ENCODE measurements at regions of chr6 and their contacts with region 1.

Region 1: DNA sequence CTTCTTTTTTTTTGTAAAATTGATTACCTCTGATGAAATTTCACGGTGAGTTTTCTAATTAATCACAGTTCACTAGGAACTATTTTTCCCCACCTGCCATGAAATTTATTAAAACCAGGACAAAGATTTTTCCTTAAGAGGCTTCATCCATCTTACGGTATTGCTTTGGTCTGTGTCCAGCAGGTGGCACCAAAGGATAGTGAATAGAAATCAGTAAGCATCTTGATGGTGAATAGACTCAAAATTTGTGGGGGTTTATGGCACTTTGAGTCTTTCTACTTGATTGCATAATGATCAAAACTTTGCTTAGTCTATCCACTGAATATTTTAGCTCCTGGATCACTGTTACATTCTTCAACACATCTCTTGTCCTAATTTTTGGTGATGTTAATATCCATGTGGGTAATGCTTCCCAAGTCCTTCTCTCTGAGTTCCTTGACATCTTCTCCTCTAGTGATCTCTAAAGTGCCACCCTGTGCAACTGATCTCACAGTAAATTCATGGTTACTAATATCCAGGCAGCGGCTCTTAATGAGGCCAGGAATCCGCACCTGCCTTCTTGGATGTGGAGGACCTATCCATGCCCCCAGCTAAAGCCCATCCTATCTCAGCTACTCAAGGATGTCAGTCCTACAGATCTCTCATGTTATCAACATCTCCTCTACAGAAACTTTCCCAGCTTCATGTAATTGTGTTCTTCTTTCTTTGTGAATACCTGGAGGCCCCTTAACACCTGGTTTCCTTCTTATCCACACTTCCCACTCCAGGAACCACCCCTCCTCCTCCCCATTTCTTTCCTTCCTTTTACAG is 54.5 kb downstream of the STMND1 start:
- DNase-seq: peak; percentile 88
- ATAC-seq: peak; percentile 76
- H3K4me3 ChIP-seq: no peak overlapping the region
- H3K27ac ChIP-seq: no peak overlapping the region
- H3K4me1 ChIP-seq: no peaks in the 10 kb centered on the region
- H3K27me3 ChIP-seq: no peaks in the 10 kb centered on the region
- CTCF ChIP-seq: peak; percentile 94

Region 2: DNA sequence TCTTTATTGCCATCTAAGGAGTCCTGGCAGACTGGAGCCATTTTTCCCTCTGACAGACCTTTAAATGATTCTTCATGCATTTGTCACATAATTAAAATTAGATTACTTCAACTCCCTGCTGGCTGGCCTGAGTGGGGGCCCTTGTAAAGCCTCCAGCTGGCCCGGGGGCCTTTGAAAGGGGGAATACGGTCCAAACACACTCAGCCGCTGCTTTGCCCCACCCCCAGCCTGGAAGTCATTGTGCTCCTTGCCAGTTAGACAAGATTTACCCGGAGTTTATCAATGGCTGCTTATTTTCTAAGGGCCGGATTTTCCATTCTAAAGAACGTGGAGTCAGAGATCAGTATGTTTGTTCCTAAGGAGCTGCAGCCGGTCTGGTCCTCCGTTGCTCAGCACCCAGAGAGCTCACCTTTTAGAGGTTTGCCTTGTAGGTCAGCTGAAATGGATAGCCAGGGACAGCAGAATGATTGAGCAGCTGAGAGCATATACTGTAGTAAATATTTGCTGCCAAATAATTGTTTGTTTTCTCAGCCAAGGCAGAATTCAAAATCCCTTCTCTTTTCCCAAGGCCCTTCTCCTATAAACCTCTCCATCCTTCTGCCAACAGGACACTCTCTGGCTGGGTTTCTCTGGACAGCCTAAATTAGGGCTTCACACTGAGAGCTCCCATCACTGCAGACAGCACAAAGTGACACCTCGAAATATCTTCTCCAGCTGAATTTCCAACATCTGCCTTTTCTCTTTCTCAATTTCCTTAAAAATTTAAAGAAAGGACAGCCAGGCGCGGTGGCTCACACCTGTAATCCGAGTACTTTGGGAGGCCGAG is 56.4 kb after region 1 on chr6:
- CTCF ChIA-PET with region 1: interaction called, 20 read pairs
- POLR2A ChIA-PET with region 1: no interaction called
- intact Hi-C with region 1: no loop called
- DNase-seq: no peak
- ATAC-seq: no peak
- H3K4me3 ChIP-seq: no peak overlapping the region
- H3K27ac ChIP-seq: no peak overlapping the region
- H3K4me1 ChIP-seq: no peaks in the 10 kb centered on the region
- H3K27me3 ChIP-seq: no peaks in the 10 kb centered on the region
- CTCF ChIP-seq: no peak

Region 3: GRCh38 chr6:17505062-17505476 is 348.8 kb after region 1 on chr6:
- CTCF ChIA-PET with region 1: no interaction called
- POLR2A ChIA-PET with region 1: no interaction called
- intact Hi-C with region 1: loop called (anchors 10 kb)
- DNase-seq: peak; percentile 39
- ATAC-seq: peak; percentile 70
- H3K4me3 ChIP-seq: no peak overlapping the region
- H3K27ac ChIP-seq: no peak overlapping the region
- H3K4me1 ChIP-seq: peaks cover 10% of the 10 kb centered on the region; the same call in 1 of the 2 replicates
- H3K27me3 ChIP-seq: no peaks in the 10 kb centered on the region
- CTCF ChIP-seq: peak; percentile 58

Region 4: DNA sequence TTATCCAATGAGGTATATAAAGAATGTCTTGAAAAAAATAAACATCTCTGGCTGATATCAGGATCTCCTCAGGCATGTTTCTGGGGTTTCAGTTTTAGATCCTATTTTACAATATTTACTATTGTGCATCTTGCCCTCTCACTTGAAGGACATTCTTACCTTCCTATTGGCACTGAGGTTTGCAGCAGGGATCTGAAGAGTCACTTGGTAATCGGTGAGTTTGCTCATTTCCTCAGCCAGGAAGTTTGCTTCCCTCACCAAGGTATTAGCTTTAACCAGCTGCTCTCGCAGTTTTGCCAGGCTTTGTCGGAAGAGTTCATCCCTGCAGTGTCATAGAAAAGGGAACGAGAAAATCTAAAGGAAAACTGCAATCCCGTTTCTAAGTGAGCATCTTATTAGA is 652.3 kb after region 1 on chr6:
- CTCF ChIA-PET with region 1: no interaction called
- POLR2A ChIA-PET with region 1: no interaction called
- intact Hi-C with region 1: loop called (anchors 2 kb)
- DNase-seq: peak; percentile 50
- ATAC-seq: peak; percentile 94
- H3K4me3 ChIP-seq: no peak overlapping the region
- H3K27ac ChIP-seq: peak overlapping the region; percentile 71
- H3K4me1 ChIP-seq: peaks cover 14% of the 10 kb centered on the region
- H3K27me3 ChIP-seq: no peaks in the 10 kb centered on the region
- CTCF ChIP-seq: no peak